ENCODE measurements at regions of chr10 and their contacts with region 1.

Region 1: GRCh38 chr10:57874810-57875209 is 392.9 kb downstream of the IPMK start:
- DNase-seq: no peak
- ATAC-seq: no peak
- H3K4me3 ChIP-seq: no peak overlapping the region
- H3K27ac ChIP-seq: no peak overlapping the region
- H3K4me1 ChIP-seq: no peaks in the 10 kb centered on the region
- H3K27me3 ChIP-seq: no peaks in the 10 kb centered on the region
- CTCF ChIP-seq: no peak
- EP300 ChIP-seq: no peak
- POLR2A ChIP-seq: no peak
- RAD21 ChIP-seq: no peak

Region 2: GRCh38 chr10:57952741-57953140 is 77.9 kb after region 1 on chr10:
- CTCF ChIA-PET with region 1: no interaction called
- POLR2A ChIA-PET with region 1: no interaction called
- in situ Hi-C with region 1: no loop called
- intact Hi-C with region 1: no loop called
- DNase-seq: no peak
- ATAC-seq: no peak
- H3K4me3 ChIP-seq: no peak overlapping the region
- H3K27ac ChIP-seq: no peak overlapping the region
- H3K4me1 ChIP-seq: no peaks in the 10 kb centered on the region
- H3K27me3 ChIP-seq: no peaks in the 10 kb centered on the region
- CTCF ChIP-seq: no peak
- EP300 ChIP-seq: no peak
- POLR2A ChIP-seq: no peak
- RAD21 ChIP-seq: no peak

Region 3: DNA sequence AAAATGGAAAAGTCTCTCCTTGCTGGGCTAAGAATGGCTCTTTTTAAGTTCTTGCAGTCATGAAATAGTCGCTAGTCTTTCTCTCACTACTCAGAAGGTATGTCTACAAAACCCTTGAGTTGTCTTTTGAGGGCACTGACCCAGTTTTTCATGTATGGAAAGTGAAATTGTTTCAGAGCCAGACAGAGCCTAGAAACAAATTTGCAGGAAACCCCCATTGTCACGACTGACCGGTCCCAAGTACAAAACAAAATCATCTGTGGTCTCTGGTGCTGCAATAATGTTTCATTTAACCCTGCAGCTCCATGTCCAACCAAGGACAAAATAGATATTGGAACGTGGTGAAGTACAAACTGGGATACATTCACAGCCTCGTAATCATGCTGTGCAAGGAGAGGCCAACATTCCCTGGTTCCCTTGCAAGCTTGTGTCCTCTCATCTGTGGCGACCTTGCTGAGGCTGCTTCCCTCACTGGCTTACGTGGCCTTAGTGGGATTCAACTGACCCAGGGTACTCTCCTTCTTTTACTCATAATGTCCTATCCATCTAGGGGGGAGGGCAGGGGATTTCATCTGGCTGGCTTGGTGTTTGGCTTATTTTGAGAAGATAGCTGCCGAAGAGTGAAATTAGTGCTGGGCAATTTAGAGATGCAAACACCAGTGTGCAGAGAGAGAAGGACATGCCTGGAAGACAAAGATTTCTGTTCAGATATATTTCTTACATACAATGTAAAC is 220.3 kb after region 1 on chr10:
- CTCF ChIA-PET with region 1: no interaction called
- POLR2A ChIA-PET with region 1: no interaction called
- in situ Hi-C with region 1: no loop called
- intact Hi-C with region 1: no loop called
- DNase-seq: no peak
- ATAC-seq: no peak
- H3K4me3 ChIP-seq: no peak overlapping the region
- H3K27ac ChIP-seq: no peak overlapping the region
- H3K4me1 ChIP-seq: no peaks in the 10 kb centered on the region
- H3K27me3 ChIP-seq: no peaks in the 10 kb centered on the region
- CTCF ChIP-seq: no peak
- EP300 ChIP-seq: no peak
- POLR2A ChIP-seq: no peak
- RAD21 ChIP-seq: no peak

Region 4: DNA sequence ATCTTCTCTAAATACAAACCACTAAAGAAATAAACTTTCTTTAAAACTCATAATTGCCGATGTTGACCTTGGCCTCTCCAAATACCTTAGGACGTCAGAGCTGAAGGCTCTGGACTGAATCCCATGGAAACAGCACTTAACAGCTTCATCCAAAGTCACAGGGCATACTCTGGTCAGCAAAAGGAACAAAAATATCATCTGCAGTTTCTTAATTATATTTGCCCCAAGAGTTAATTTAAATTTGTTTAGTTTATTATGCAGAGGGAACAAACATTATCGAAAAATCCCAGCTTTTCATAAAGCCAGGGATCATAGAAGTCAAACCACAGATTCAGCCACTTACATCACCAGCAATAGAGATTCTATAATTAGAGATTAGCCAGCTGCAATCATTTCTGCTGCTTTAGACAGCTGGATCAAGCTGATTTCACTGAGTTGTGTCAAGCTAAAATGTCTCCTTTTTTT is 1508.1 kb after region 1 on chr10:
- CTCF ChIA-PET with region 1: no interaction called
- POLR2A ChIA-PET with region 1: no interaction called
- in situ Hi-C with region 1: no loop called
- intact Hi-C with region 1: loop called (anchors 5 kb)
- DNase-seq: no peak
- ATAC-seq: no peak
- H3K4me3 ChIP-seq: no peak overlapping the region
- H3K27ac ChIP-seq: no peak overlapping the region
- H3K4me1 ChIP-seq: no peaks in the 10 kb centered on the region
- H3K27me3 ChIP-seq: peaks cover 0 to 4% of the 10 kb centered on the region in 2 experiments; a peak in 1 of 5 replicates
- CTCF ChIP-seq: no peak
- EP300 ChIP-seq: no peak
- POLR2A ChIP-seq: no peak
- RAD21 ChIP-seq: no peak

Measured in HepG2 (cell line).